Psoas muscle (tissue), 8 donors: ENCODE measurements at regions of chr15 and their contacts with region 1.

Region 1: DNA sequence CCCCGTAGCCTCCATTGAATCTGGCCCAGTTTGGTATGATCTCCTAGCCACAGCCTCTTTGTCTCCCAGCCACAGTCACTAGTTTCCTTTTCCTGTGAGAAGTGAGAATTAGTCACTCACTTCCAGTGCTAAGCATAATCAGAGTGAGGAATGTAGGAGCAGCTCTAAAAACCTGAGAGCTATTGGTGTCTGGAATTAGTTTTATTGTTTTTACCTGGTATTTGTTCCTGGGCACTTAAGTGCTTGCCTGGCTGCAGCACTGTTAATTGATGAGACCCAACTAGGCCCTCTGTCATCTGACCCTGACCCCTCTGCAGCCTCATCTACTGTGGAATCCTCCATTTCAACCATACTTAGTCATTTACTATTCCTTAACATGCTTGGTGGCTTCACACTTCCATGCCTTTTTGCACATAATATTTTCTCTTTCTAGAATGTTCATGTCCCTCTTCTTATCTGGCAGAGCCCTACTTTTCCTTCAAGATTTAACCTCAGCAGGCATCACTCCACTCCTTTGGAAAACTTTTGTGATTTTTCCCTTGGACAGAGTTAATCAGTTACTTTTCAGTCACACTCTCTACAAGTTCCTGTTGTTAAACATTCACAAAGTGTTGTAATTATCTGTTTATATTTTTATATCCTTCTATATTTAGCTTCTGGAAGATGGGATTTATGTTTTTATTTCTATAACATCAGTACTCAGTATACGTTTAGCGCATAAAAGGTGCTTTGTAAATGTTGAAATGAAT is 48.8 kb downstream of the PDE8A start:
- DNase-seq: no peak
- ATAC-seq: no peak
- H3K4me3 ChIP-seq: no peak overlapping the region
- H3K27ac ChIP-seq: peak overlapping the region; percentile 38
- H3K4me1 ChIP-seq: peaks cover 37% of the 10 kb centered on the region
- H3K27me3 ChIP-seq: no peaks in the 10 kb centered on the region
- CTCF ChIP-seq: no peak

Region 2: GRCh38 chr15:84981054-84981710 is 49.3 kb before region 1 on chr15:
- intact Hi-C with region 1: loop called in 1 of 2 experiments (anchors 10 kb)
- DNase-seq: peak; percentile 95 to 98
- ATAC-seq: peak; percentile 92 to 94 (median 93)
- H3K4me3 ChIP-seq: peak overlapping the region; percentile 93
- H3K27ac ChIP-seq: peak overlapping the region; percentile 97
- H3K4me1 ChIP-seq: peaks cover 34% of the 10 kb centered on the region
- H3K27me3 ChIP-seq: no peaks in the 10 kb centered on the region
- CTCF ChIP-seq: peak; percentile 24